Thyroid gland (tissue), 4 donors: ENCODE measurements at regions of chr19 and their contacts with region 1.

Region 1: GRCh38 chr19:49210108-49210900 is 52.7 kb downstream of the TRPM4 start:
- DNase-seq: no peak
- H3K4me3 ChIP-seq: no peak overlapping the region
- H3K27ac ChIP-seq: no peak overlapping the region
- H3K4me1 ChIP-seq: peaks cover 7% of the 10 kb centered on the region in 2 donors
- H3K27me3 ChIP-seq: no peaks in the 10 kb centered on the region
- CTCF ChIP-seq: no peak
- POLR2A ChIP-seq: no peak

Region 2: DNA sequence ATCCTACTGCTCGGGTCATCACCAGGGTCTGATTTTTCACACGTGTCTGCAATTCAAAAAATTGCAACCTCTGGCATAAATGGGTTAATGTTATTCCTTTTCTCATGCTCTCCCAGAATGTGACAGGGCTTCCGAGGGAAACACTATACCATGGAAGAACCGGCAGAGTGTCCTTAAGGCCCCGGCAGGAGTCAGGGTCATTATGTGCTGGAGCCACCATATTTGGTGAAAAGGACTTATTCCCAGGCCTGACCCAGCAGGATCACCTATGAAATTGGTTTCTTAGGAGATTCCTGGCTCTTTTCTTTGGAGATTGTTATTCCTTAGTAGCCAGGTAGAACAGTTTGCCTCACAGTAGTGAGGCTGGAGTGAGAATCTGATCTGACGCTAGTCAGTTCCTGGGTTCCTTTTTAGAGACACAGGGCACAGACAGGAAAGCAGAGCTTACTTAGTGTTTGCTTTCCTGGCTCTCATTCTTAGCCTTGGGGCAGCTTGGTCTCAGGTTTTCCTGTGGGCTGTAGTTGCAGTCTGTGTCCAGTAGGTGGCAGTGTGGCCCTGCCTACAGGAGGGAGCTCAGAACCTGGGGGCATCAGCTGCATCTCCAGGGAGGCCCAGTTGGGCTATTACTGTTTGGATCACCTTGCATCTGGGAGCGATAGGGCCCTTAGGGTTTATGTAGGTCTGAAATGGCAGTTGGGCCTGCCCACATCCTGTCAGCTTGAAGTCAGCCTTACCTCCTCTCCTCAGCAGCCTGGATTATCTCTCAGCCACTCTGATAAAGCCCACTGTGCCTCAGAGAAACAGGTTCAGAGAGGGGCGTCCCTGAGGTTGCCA is 112.6 kb before region 1 on chr19:
- intact Hi-C with region 1: loop called (anchors 5 kb)
- DNase-seq: peak; percentile 66 to 72
- H3K4me3 ChIP-seq: no peak overlapping the region
- H3K27ac ChIP-seq: peak overlapping the region in 1 of 3 donors; percentile 13
- H3K4me1 ChIP-seq: peaks cover 8 to 22% of the 10 kb centered on the region in 2 donors
- H3K27me3 ChIP-seq: no peaks in the 10 kb centered on the region
- CTCF ChIP-seq: peak in 5 of 6 experiments; percentile 97 to 98 (median 97)
- POLR2A ChIP-seq: no peak

Region 3: DNA sequence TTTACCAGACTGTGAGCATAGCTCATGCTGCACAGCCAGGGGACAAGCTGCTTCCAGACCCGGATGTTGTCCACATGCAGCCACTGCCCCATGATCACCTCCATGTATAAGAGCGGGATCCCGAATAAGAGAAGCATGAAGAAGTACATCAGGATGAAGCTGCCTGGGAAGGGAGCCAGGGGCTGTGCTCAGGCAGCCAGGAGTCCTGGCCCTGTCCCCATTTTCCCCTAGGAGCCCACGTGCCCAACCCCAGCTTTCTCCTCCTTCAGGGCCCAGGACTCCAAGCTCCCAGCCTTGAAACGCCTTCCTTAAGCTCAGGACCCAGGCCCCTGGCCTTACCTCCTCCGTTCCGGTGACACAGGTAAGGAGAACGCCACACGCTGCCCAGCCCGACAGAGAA is 45.4 kb after region 1 on chr19:
- intact Hi-C with region 1: no loop called
- DNase-seq: peak; percentile 14
- H3K4me3 ChIP-seq: no peak overlapping the region
- H3K27ac ChIP-seq: no peak overlapping the region
- H3K4me1 ChIP-seq: no peaks in the 10 kb centered on the region
- H3K27me3 ChIP-seq: no peaks in the 10 kb centered on the region
- CTCF ChIP-seq: no peak
- POLR2A ChIP-seq: no peak